Transverse colon (tissue), 4 donors: ENCODE measurements at regions of chr4 and their contacts with region 1.

Region 1: DNA sequence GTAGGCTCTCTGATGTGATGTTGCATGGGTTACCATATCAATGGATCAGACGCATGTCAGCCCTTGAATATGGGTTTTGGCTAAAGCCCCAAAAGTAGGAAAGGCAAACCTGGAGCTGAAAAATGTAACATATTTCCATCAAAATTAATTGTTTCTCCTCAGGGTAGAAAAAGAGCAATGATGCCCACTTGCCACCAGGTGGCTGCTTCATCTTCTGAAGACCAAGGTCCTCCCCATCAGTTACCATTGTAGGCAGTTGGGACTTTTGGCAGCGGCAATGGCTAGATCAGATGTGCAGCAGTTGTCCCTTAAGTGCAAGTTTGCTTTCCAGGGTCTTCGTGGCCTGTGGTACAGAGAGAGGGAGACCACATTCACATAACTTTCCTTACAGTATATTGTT is 118.2 kb downstream of the NAF1 start:
- DNase-seq: peak; percentile 13
- H3K4me3 ChIP-seq: no peak overlapping the region
- H3K27ac ChIP-seq: no peak overlapping the region
- H3K4me1 ChIP-seq: no peaks in the 10 kb centered on the region
- H3K27me3 ChIP-seq: no peaks in the 10 kb centered on the region
- CTCF ChIP-seq: peak; percentile 19 to 47 (median 38)
- EP300 ChIP-seq: no peak
- POLR2A ChIP-seq: no peak

Region 2: GRCh38 chr4:162497564-162498167 is 550.8 kb before region 1 on chr4:
- in situ Hi-C with region 1: loop called in 2 of 4 experiments (anchors 25 kb)
- intact Hi-C with region 1: no loop called
- DNase-seq: no peak
- H3K4me3 ChIP-seq: no peak overlapping the region
- H3K27ac ChIP-seq: no peak overlapping the region
- H3K4me1 ChIP-seq: no peaks in the 10 kb centered on the region
- H3K27me3 ChIP-seq: no peaks in the 10 kb centered on the region
- CTCF ChIP-seq: peak; percentile 78 to 84 (median 82)
- EP300 ChIP-seq: no peak
- POLR2A ChIP-seq: no peak

Region 3: GRCh38 chr4:162506253-162506652 is 542.2 kb before region 1 on chr4:
- in situ Hi-C with region 1: loop called in 1 of 4 experiments (anchors 25 kb)
- intact Hi-C with region 1: no loop called
- DNase-seq: no peak
- H3K4me3 ChIP-seq: no peak overlapping the region
- H3K27ac ChIP-seq: no peak overlapping the region
- H3K4me1 ChIP-seq: no peaks in the 10 kb centered on the region
- H3K27me3 ChIP-seq: no peaks in the 10 kb centered on the region
- CTCF ChIP-seq: no peak
- EP300 ChIP-seq: no peak
- POLR2A ChIP-seq: no peak

Region 4: GRCh38 chr4:162645381-162645780 is 403.1 kb before region 1 on chr4:
- in situ Hi-C with region 1: loop called in 2 of 4 experiments (anchors 25 kb)
- intact Hi-C with region 1: no loop called
- DNase-seq: no peak
- H3K4me3 ChIP-seq: no peak overlapping the region
- H3K27ac ChIP-seq: no peak overlapping the region
- H3K4me1 ChIP-seq: no peaks in the 10 kb centered on the region
- H3K27me3 ChIP-seq: no peaks in the 10 kb centered on the region
- CTCF ChIP-seq: peak in 3 of 5 experiments; percentile 34 to 47 (median 36)
- EP300 ChIP-seq: no peak
- POLR2A ChIP-seq: no peak